ENCODE measurements at regions of chr14 and their contacts with region 1.

Region 1: GRCh38 chr14:32939254-32940065 is 781 bp downstream of the NPAS3 start:
- DNase-seq: peak; percentile 77
- ATAC-seq: peak; percentile 75
- H3K4me3 Mint-ChIP-seq: peak overlapping the region; percentile 94
- H3K27ac Mint-ChIP-seq: peak overlapping the region; percentile 39; the same call in 1 of the 2 replicates
- H3K4me1 Mint-ChIP-seq: peaks cover 43% of the 10 kb centered on the region
- H3K27me3 Mint-ChIP-seq: peaks cover 52% of the 10 kb centered on the region
- CTCF ChIP-seq: no peak

Region 2: GRCh38 chr14:32724867-32725471 is 214.5 kb before region 1 on chr14:
- CTCF ChIA-PET with region 1: no interaction called
- POLR2A ChIA-PET with region 1: interaction called, 10 read pairs
- DNase-seq: peak; percentile 31
- ATAC-seq: no peak
- H3K4me3 Mint-ChIP-seq: peak overlapping the region; percentile 20; the same call in 1 of the 2 replicates
- H3K27ac Mint-ChIP-seq: peak overlapping the region; percentile 74; the same call in 1 of the 2 replicates
- H3K4me1 Mint-ChIP-seq: peaks cover 18% of the 10 kb centered on the region
- H3K27me3 Mint-ChIP-seq: no peaks in the 10 kb centered on the region
- CTCF ChIP-seq: no peak

Measured in WTC11 (cell line).